ENCODE measurements at regions of chr16 and their contacts with region 1.

Region 1: DNA sequence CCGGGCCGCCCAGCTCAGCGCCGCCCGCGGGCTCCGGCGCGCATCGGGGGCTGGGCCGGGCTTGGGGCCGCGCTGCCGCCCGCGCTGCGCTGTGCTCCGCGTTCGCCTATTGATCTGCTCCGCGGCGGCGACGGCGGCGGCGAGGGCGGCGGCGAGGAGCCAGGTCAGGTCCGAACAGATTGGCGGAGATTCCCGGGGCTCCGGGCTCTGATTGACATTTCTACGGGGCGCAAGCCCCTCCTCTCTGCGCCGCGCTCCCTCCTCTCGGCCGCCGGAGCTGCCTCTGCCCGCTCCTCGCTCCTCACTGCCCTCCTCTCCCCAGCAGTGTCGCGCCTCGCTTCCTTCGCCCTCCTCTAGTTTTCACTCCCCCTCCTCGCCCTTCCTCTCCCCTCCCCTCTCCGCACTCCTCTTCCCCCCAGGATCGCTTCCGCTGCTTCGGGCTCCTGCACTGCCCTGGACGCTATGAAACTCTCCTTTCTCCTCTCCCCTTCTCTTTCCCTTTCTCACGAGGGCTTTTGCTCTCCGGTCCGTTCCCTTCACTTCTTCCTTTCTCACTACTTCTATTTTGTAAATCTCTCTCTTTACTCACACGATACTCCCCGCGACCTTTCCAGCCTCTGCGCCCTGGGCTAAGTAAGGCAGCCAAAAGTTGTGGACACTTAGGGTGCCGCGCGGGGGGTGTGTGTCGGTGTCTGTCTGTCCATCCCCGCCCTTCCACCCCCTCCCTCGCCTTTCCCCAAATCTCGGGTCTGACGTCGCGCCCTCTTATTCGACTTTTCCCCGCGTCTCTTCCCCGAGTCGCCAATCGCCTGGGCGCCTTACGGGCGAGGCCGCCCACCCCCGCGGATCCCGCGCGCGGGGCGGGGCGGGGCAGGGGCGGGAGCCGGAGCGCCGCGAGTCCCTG is at the start of gene IRX3:
- DNase-seq: peak; percentile 86
- H3K4me3 Mint-ChIP-seq: peak within 1 kb of the TSS; percentile 78
- H3K27ac Mint-ChIP-seq: peak within 1 kb of the TSS; percentile 1
- H3K4me1 Mint-ChIP-seq: peaks cover 8% of the 10 kb centered on the region
- H3K27me3 Mint-ChIP-seq: peaks cover 54% of the 10 kb centered on the region
- CTCF ChIP-seq: no peak
- total RNA-seq, gene IRX3: 5.7 TPM in 2 replicates

Region 2: GRCh38 chr16:53892155-53892554 is 394.2 kb before region 1 on chr16:
- CTCF ChIA-PET with region 1: interaction called, 3 read pairs
- intact Hi-C with region 1: loop called (anchors 10 kb)
- DNase-seq: peak; percentile 67
- H3K4me3 Mint-ChIP-seq: no peak overlapping the region
- H3K27ac Mint-ChIP-seq: no peak overlapping the region
- H3K4me1 Mint-ChIP-seq: peaks cover 11% of the 10 kb centered on the region
- H3K27me3 Mint-ChIP-seq: no peaks in the 10 kb centered on the region
- CTCF ChIP-seq: peak; percentile 31

Region 3: GRCh38 chr16:54123766-54124165 is 162.6 kb before region 1 on chr16:
- CTCF ChIA-PET with region 1: no interaction called
- intact Hi-C with region 1: no loop called
- DNase-seq: no peak
- H3K4me3 Mint-ChIP-seq: no peak overlapping the region
- H3K27ac Mint-ChIP-seq: no peak overlapping the region
- H3K4me1 Mint-ChIP-seq: no peaks in the 10 kb centered on the region
- H3K27me3 Mint-ChIP-seq: peaks cover 23% of the 10 kb centered on the region
- CTCF ChIP-seq: no peak

Region 4: GRCh38 chr16:54929090-54930004 is 643.0 kb after region 1 on chr16:
- CTCF ChIA-PET with region 1: no interaction called
- intact Hi-C with region 1: loop called (anchors 10 kb)
- DNase-seq: peak; percentile 100
- H3K4me3 Mint-ChIP-seq: peak overlapping the region; percentile 95
- H3K27ac Mint-ChIP-seq: peak overlapping the region; percentile 84
- H3K4me1 Mint-ChIP-seq: peaks cover 18% of the 10 kb centered on the region
- H3K27me3 Mint-ChIP-seq: no peaks in the 10 kb centered on the region
- CTCF ChIP-seq: no peak

Region 5: DNA sequence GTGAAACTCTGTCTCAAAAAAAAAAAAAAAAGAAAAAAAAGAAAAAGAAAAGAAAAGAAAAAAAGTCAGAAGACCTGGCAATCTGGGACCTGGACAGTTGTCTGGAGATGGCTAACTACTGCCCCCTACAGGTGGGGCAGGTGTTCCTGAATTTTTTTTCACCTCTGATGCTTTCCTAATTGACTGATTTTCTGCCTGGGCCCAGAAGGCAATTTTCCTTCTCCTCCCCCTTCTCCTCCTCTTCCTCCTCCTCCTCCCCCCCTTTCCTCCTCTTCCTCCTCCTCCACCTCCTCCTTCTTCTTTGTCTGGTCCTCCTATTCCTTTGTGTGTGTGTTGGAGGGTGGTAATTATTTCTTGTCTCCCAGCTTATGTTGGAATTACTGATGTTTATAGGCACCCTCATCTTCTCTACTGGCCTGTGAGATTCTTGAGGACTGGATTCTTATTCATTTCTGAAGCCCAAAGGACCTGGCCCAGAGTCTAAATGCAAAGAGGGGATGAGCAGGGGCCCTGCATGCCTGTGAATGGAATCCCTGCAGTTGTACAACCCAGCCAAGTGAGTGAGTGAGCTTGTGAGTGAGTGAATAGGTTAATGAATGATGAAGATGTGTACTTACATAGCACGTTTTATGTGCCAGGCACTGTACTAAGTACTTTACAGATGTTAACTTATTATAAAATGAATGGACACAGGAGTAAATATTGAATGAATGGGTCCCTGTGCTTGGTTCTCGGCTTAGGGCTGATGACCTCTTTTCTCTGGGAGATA is 671.2 kb after region 1 on chr16:
- CTCF ChIA-PET with region 1: no interaction called
- intact Hi-C with region 1: loop called (anchors 5 kb)
- DNase-seq: peak; percentile 81
- H3K4me3 Mint-ChIP-seq: no peak overlapping the region
- H3K27ac Mint-ChIP-seq: no peak overlapping the region
- H3K4me1 Mint-ChIP-seq: no peaks in the 10 kb centered on the region
- H3K27me3 Mint-ChIP-seq: peaks cover 33% of the 10 kb centered on the region
- CTCF ChIP-seq: peak; percentile 84

Measured in Calu3 (cell line).